Motor neuron (in vitro differentiated cells): ENCODE measurements at regions of chr9 and their contacts with region 1.

Region 1: DNA sequence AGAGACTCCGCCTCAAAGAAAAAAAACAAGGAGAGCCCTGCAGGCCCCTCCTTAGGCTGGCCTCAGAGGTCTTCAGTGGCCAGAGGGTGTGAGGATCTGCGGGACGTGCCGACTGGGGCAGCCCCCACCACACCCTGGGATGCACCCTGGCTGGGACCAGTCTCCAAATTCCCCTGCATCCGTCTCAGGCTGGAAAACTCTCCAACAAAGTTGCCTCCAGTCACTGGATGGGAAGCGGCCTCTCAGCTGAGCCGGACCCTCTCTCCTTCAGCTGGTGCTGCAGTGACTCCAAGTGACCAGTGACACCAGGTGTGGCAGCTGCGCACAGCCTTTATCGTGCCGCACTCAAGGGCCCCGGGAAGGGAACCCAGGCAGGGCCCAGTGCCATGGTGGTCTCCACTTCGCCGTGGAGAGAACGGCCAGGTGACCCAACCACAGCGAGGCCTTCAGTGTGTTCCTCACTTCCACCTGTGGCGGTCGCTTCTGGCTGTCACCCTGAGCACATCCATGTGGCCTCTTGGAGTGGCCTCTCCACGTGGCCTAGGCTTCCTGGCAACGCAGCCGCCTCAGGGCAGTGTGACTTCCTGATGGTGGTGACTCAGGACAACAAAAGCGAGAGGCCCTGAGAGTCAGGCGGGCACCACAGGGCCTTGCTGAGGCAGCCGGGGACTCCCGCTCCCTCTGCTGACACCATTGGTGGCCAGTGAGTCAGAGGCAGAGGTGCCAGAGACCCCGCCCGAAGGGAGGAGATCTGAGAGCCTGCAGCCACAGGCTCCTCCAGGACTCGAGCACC is 19.3 kb upstream of the CAMSAP1 start:
- ATAC-seq: peak in 7 of 8 experiments; percentile 29 to 97 (median 83)
- H3K4me3 ChIP-seq: no peak overlapping the region
- H3K27ac ChIP-seq: no peak overlapping the region
- H3K4me1 ChIP-seq: no peaks in the 10 kb centered on the region

Region 2: GRCh38 chr9:135602789-135603481 is 323.7 kb before region 1 on chr9:
- in situ Hi-C with region 1: loop called in 1 of 9 experiments (anchors 25 kb)
- ATAC-seq: peak in 3 of 8 experiments; percentile 27 to 69 (median 55)
- H3K4me3 ChIP-seq: no peak overlapping the region
- H3K27ac ChIP-seq: no peak overlapping the region
- H3K4me1 ChIP-seq: no peaks in the 10 kb centered on the region

Region 3: GRCh38 chr9:135662758-135663450 is 263.7 kb before region 1 on chr9 and contains the start of gene LCN9:
- in situ Hi-C with region 1: no loop called
- ATAC-seq: peak in 5 of 8 experiments; percentile 55 to 87 (median 61)
- H3K4me3 ChIP-seq: no peak within 1 kb of the TSS
- H3K27ac ChIP-seq: no peak within 1 kb of the TSS
- H3K4me1 ChIP-seq: no peaks in the 10 kb centered on the region
- total RNA-seq, gene LCN9: 0.78 to 1.7 (median 0.81) TPM in 3 of 8 experiments, not detected in the others

Region 4: GRCh38 chr9:135689011-135689410 is 237.6 kb before region 1 on chr9:
- in situ Hi-C with region 1: no loop called
- ATAC-seq: peak in 1 of 8 experiments; percentile 32
- H3K4me3 ChIP-seq: no peak overlapping the region
- H3K27ac ChIP-seq: no peak overlapping the region
- H3K4me1 ChIP-seq: peaks cover 0 to 2% of the 10 kb centered on the region in 2 donors

Region 5: GRCh38 chr9:135826188-135826545 is 100.4 kb before region 1 on chr9:
- in situ Hi-C with region 1: no loop called
- ATAC-seq: no peak
- H3K4me3 ChIP-seq: no peak overlapping the region
- H3K27ac ChIP-seq: no peak overlapping the region
- H3K4me1 ChIP-seq: no peaks in the 10 kb centered on the region